HEK293T (cell line): ENCODE measurements at regions of chr2 and their contacts with region 1.

Region 1: DNA sequence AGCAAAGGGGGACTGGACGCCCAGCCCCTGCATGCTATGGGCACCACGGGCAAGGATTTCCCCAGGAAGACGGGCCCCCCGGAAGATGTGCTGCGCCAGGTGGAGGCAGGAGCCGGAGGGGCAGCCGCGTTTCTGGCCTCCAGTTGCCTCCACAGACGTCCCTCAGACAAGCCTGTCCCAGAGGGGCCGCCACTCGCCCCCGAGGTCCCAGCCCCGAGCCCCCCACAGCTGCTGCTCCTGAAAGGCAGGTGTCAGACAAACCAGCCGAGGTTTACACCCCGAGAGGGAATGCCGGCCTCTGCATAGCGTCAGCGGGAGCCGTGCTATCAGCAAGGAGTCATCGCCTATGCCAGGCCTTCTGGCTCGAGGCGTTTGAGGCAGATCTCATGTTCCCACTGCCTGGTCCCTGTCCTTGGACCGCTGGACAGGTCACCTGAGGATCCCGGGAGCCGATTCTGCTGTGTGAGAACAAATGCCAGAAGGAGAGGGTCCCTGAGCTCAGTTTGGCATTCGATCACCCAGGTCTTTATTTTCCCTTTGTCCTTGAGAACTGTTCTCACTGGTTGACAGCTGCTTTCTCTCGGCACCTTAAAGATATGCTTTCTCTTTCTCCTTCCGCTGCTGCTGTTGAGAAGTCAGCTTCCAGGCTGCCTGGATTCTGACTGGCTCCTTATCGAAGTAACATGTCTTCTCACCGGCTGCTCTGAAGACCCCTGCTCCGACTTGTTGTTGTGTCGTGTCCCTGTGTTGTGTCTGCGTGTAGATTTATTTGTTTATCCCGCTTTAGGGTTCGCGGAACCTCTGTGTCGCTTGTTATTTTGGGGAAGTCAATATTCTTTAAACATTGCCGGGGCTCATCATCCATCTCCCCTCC is 20.6 kb downstream of the CROCC2 start:
- DNase-seq: no peak

Region 2: GRCh38 chr2:240913810-240914644 is 12.7 kb before region 1 on chr2:
- CTCF ChIA-PET with region 1: interaction called, 10 read pairs
- POLR2A ChIA-PET with region 1: no interaction called
- DNase-seq: peak; percentile 78